ENCODE measurements at regions of chr2 and their contacts with region 1.

Region 1: DNA sequence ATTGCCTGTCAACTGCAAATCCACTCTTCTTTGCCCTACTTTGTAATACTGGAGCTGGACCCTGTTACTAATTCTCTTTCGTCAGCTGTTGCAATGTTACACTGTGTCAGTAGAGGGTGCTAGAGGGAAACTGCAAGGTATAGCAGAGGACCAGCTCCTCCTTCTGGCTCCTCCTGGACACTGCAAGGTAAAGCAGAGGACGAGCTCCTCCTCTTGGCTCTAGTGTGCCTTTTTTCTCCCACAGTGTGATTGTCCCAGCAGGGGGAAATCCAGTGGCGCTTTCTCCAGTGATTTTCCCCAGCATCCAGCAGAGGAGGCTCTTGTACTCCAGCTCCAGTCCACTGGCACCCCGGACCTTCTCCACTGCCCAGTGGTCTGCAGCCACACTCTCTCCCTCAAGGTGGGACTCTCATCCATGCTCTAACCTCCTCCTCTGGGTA is 95.6 kb downstream of the CAPN13 start:
- DNase-seq: peak; percentile 84 to 89 (median 85)
- ATAC-seq: peak; percentile 28 to 80 (median 74)
- H3K4me3 ChIP-seq: no peak overlapping the region
- H3K27ac ChIP-seq: no peak overlapping the region
- H3K4me1 ChIP-seq: peaks cover 0 to 20% (median 4%) of the 10 kb centered on the region in 12 donors
- H3K27me3 ChIP-seq: no peaks in the 10 kb centered on the region
- CTCF ChIP-seq: peak; percentile 97 to 100 (median 99)
- POLR2A ChIP-seq: no peak

Region 2: DNA sequence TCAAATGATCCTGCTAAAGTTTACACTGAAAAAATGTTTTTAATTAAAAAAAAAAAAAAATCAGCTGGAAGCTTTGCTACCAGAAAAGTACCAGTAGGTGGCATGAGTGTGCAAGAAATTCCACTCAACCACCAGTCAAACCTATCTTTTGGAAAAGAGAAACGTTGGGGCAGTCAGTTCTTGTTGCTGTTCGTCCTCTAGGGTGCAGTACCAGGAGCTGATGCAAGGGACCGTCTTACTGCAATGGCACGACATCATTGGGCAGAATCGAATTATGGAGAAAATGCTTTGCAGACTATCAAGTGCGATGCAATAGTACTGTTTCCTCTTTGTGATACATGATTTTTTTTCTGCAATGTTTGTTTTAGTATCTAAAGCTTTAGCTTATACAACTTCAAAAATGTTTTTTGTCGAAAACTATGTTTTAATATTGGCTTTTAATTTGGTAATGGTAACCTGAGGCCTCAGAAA is 546.6 kb before region 1 on chr2:
- intact Hi-C with region 1: loop called in 9 of 10 experiments (anchors 1 to 5 kb)
- DNase-seq: peak in 4 of 5 donors; percentile 50 to 61 (median 56)
- ATAC-seq: peak in 3 of 4 donors; percentile 81 to 88 (median 85)
- H3K4me3 ChIP-seq: no peak overlapping the region
- H3K27ac ChIP-seq: no peak overlapping the region
- H3K4me1 ChIP-seq: peaks cover 0 to 19% (median 0%) of the 10 kb centered on the region in 12 donors
- H3K27me3 ChIP-seq: no peaks in the 10 kb centered on the region
- CTCF ChIP-seq: peak; percentile 84 to 95 (median 90)
- POLR2A ChIP-seq: no peak

Region 3: DNA sequence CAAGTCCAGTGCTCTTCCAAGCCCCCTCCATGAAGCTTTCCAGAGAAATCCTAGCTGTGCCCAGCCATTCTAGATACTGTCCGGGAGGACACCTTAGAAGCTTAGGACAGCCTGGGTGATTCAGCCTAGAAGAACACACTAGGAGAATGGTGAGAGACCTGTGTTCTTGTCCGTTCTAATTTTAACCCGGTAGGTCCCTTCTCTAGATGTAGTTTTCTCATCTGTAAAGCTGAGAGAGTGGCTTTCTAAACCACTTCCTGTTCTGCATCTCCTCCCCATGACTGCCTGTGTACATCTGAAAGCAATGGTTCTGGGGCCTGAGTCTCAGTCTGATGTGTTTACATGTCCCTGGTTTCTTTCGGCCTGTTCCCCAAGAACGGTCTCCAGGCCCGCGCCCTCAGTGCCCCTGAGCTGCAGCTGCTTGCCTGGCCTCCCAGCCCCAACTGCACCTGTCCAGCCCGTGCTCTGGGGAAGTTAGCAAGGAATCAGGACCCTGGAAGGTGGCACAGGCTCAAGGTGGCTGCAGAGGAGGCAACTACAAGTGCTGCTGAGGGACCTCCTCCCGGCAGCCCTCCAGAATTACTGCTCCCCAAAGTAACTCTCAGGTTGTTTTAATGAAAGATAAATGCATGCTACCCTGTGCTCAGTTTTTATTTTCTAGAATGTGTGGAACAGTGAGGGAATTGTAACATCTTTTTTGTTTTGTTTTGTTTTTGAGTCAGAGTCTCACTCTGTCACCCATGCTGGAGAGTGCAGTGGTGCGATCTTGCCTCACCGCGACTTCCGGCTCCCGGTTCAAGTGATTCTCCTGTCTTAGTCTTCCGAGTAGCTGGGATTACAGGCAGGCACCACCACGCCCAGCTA is 374.5 kb before region 1 on chr2:
- intact Hi-C with region 1: loop called in 5 of 10 experiments (anchors 5 to 10 kb)
- DNase-seq: no peak
- ATAC-seq: no peak
- H3K4me3 ChIP-seq: no peak overlapping the region
- H3K27ac ChIP-seq: peak overlapping the region in 4 of 12 donors; percentile 26 to 77 (median 60)
- H3K4me1 ChIP-seq: peaks cover 0 to 46% (median 25%) of the 10 kb centered on the region in 12 donors
- H3K27me3 ChIP-seq: no peaks in the 10 kb centered on the region
- CTCF ChIP-seq: no peak
- POLR2A ChIP-seq: no peak

Region 4: GRCh38 chr2:30410217-30410616 is 301.4 kb before region 1 on chr2:
- intact Hi-C with region 1: loop called in 3 of 10 experiments (anchors 5 to 10 kb)
- DNase-seq: no peak
- ATAC-seq: no peak
- H3K4me3 ChIP-seq: no peak overlapping the region
- H3K27ac ChIP-seq: peak overlapping the region in 11 of 12 donors; percentile 51 to 91 (median 82)
- H3K4me1 ChIP-seq: peaks cover 3 to 77% (median 58%) of the 10 kb centered on the region in 12 donors
- H3K27me3 ChIP-seq: no peaks in the 10 kb centered on the region
- CTCF ChIP-seq: no peak
- POLR2A ChIP-seq: no peak

Region 5: DNA sequence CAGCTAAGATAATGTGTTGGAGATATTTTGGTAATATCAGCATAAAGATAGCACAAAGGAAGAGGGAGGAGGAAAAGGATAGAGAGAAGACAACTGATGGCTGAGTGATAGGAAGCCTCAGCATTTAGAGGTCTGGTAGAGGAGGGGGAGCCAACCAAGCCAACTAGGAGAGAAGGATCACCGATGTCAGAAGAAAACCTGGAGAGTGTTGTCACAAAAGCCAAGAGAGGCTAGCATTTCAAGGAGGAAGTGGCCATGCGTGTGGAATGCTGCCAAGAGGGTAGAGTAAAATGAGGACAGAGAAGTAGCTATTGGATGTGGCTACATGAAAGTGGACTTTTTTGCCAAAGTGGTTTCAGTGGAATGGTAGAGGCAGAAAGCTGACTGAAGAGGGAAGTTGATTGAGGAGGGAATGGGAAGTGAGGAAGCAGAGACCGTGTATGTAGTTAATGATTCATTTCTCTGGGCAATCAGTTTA is 230.3 kb before region 1 on chr2:
- intact Hi-C with region 1: loop called in 2 of 10 experiments (anchors 10 kb)
- DNase-seq: peak in 4 of 5 donors; percentile 34 to 69 (median 48)
- ATAC-seq: peak in 3 of 4 donors; percentile 38 to 50 (median 43)
- H3K4me3 ChIP-seq: no peak overlapping the region
- H3K27ac ChIP-seq: peak overlapping the region in 10 of 12 donors; percentile 2 to 62 (median 44)
- H3K4me1 ChIP-seq: peaks cover 3 to 49% (median 26%) of the 10 kb centered on the region in 12 donors
- H3K27me3 ChIP-seq: no peaks in the 10 kb centered on the region
- CTCF ChIP-seq: no peak
- POLR2A ChIP-seq: no peak

Region 6: GRCh38 chr2:31333527-31334183 is 622.0 kb after region 1 on chr2:
- intact Hi-C with region 1: loop called (anchors 1 to 5 kb)
- DNase-seq: peak; percentile 67 to 83 (median 72)
- ATAC-seq: peak; percentile 70 to 88 (median 80)
- H3K4me3 ChIP-seq: no peak overlapping the region
- H3K27ac ChIP-seq: no peak overlapping the region
- H3K4me1 ChIP-seq: peaks cover 0 to 7% (median 0%) of the 10 kb centered on the region in 12 donors
- H3K27me3 ChIP-seq: no peaks in the 10 kb centered on the region
- CTCF ChIP-seq: peak; percentile 82 to 98 (median 94)
- POLR2A ChIP-seq: no peak